ENCODE measurements at regions of chr1 and their contacts with region 1.

Region 1: DNA sequence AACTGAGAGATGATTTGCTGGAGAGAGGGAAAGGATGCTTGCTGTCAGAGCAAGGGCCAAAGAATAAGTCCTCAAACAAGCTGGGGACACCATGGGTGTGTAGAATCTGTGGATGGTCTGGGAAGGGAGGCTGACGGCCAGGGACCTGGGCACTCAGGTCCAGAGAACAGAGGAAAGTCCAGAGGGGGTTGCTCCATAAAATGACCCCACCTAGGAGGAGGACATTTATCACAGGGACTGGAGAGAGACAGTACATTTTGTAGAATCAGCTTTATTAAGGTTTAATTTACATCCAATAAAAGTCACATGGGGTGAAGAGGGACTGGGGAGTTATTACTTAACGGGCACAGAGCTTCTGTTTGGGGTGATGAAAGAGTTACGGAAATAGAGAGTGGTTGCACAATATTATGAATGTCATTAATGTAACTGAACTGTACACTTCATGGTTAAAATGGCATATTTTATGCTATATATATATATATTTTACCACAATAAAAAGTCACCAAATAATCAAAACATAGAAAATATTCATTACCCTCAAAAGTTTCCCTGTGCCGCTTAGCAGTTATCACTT is 73.0 kb upstream of the ABCD3 start:
- DNase-seq: no peak
- H3K4me3 ChIP-seq: no peak overlapping the region
- H3K27ac ChIP-seq: no peak overlapping the region
- H3K4me1 ChIP-seq: no peaks in the 10 kb centered on the region
- H3K27me3 ChIP-seq: no peaks in the 10 kb centered on the region
- CTCF ChIP-seq: no peak
- POLR2A ChIP-seq: no peak

Region 2: GRCh38 chr1:93196591-93196990 is 1148.6 kb before region 1 on chr1:
- intact Hi-C with region 1: no loop called
- DNase-seq: no peak
- H3K4me3 ChIP-seq: no peak overlapping the region
- H3K27ac ChIP-seq: no peak overlapping the region
- H3K4me1 ChIP-seq: no peaks in the 10 kb centered on the region
- H3K27me3 ChIP-seq: no peaks in the 10 kb centered on the region
- CTCF ChIP-seq: no peak
- POLR2A ChIP-seq: no peak

Region 3: DNA sequence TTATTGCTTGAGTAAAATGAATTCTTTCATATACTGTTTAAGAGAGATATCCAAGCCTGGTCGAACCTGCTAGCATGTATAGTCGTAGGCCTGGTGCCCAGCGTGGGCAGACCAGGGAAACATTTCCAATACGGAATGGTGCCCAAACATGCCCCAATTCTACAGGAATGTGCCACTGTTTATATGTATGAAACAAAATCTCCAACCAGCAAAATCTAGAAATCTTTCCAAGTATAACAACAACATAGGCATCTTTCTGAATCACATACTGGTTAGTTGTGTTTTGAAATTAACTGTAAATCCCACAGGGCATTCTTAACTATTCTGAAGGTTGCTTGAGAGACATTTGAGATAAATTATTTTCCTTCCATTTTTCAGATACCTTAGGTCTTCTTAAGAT is 56.0 kb after region 1 on chr1:
- intact Hi-C with region 1: loop called (anchors 2 kb)
- DNase-seq: peak in 1 of 2 donors; percentile 27
- H3K4me3 ChIP-seq: no peak overlapping the region
- H3K27ac ChIP-seq: no peak overlapping the region
- H3K4me1 ChIP-seq: no peaks in the 10 kb centered on the region
- H3K27me3 ChIP-seq: no peaks in the 10 kb centered on the region
- CTCF ChIP-seq: no peak
- POLR2A ChIP-seq: no peak